HEK293 (cell line): ENCODE measurements at regions of chr11 and their contacts with region 1.

Region 1: DNA sequence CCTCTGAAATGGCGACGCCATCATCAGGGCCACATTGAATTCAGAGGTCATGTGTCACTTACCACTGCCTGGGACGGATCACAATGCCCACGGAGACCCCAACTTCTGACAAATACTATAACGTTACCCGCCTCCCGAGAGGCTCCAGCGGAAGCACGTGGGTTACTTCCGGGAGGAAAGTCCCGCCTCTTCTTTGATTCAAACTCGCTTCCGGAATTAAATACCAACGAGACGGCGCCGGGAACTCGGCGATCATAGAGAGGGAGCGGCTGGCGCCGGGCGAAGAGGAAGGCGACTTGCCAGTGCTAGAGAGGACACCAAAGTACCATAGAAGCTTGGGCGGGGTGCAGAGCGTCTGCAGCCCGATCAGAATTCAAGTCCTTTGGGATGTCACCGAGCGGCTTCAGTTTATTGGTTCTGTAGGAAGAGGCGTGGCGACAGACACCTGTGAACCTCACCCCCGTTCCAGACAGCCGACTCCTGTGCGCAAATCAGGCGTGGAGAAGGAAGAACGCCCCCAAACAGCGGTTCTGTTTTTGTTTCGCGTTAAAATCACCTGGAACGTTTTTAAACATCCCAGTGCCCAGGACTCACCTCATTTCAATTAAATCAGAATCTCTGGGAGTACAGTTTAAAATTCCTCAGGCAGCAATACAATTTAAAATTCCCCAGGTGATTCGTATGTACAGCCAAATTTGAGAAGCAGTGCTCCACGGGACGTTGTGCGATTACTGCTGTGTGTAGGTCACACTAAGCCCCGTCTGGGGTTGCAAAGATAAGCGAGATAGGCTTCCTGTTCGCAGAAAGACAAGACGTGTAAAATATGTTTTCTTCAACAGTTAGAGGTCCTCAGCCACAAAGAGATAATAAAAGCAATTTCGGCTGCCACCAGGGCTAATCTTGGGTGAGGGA is at the start of gene TIMM10:
- H3K4me3 ChIP-seq: peak within 1 kb of the TSS; percentile 94
- H3K27ac ChIP-seq: no peak within 1 kb of the TSS
- H3K4me1 ChIP-seq: no peaks in the 10 kb centered on the region
- CTCF ChIP-seq: no peak

Region 2: GRCh38 chr11:57456960-57457642 is 73.8 kb before region 1 on chr11:
- CTCF ChIA-PET with region 1: interaction called, 191 read pairs
- POLR2A ChIA-PET with region 1: interaction called, 6 read pairs
- H3K4me3 ChIP-seq: no peak overlapping the region
- H3K27ac ChIP-seq: no peak overlapping the region
- H3K4me1 ChIP-seq: no peaks in the 10 kb centered on the region
- CTCF ChIP-seq: peak; percentile 52

Region 3: DNA sequence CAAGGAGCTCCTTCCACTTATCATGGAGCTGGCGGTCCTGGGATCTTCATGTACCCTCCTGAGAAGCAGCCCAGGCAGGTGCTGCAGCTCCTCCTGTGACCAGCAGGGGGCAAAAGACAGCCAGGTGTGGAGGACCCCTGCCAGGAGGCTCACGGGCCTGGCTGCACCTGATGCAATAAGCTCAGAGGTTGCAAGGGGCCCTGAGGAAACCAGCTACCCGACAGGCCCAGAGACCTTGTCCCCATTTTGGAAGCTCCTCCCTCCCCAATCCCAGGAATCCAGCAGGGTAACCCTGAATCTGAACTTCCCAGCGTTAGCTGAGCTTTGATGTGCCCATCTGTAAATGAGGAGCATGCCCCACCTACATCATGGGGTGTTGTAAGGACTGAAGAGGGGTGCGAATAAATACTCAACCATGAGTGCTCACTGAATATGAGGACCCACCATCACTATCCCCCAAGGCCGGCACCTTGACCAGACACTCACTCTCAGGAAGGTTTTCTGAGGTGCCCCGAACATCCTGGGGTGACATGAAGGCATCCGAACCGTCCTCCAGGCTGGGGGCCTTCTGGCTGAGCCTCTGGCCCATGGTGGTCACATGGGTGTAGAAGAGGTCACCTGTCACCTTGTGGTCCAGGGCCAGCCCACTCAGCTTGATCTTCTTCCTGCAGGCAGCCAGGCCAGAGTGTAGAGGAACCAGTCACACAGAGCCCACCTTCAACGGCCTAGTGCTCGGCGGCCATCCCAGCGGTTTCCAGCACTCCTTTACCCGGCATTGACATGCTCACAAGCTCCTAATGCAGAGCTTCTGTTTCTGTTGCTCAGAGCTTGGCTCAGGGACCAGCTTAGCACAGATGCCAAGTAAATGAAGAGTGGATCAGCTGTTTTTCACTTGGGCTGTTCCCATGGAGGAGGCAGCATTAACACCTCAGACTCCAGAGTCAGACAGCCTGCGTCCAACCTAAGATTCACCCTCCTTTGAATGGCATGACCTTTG is 37.0 kb before region 1 on chr11:
- CTCF ChIA-PET with region 1: interaction called, 218 read pairs
- POLR2A ChIA-PET with region 1: interaction called, 11 read pairs
- H3K4me3 ChIP-seq: no peak overlapping the region
- H3K27ac ChIP-seq: peak overlapping the region; percentile 21; the same call in 1 of the 2 replicates
- H3K4me1 ChIP-seq: no peaks in the 10 kb centered on the region
- CTCF ChIP-seq: 0 out of 2 replicates have a peak, but pooled peaks have one; percentile 18

Region 4: DNA sequence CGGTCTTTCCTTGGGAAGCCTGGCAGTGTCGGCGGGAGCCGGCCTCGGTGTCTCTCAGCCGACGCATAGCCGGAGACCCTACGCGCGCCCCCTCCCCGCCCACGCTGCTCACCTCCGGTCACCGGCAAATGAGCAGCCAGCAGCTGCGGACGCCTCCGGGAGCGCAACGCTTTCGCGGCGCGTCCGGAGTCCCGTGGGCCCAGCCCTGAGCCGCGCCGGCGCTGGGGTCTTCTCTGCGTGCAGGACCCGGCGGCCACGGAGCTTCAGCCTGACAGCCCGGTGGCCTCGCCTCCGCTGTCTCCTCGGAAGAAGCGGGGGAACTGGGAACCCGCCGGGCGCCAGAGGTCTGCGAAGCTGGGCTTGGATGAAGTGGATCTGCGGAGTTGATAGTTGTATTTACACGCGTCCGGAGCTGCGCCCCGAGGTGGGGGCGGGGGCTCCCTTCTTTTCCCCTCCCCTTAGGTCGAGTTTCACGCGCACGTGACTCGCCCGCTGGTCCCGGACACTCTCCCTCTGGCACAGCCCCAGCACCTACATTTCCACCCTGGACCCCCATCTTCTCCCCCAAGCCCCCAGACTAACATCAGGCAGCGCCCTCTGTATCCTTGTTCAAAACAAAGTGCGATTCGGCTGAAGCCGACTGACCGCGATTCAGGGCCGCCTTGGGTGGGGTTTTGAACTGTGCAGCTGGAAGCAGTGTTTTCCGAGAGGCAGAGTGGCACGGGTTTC is 15.4 kb before region 1 on chr11 and contains the start of gene SLC43A1:
- CTCF ChIA-PET with region 1: interaction called, 71 read pairs
- POLR2A ChIA-PET with region 1: interaction called, 3 read pairs
- H3K4me3 ChIP-seq: peak within 1 kb of the TSS; percentile 59
- H3K27ac ChIP-seq: peak within 1 kb of the TSS; percentile 11; the same call in 1 of the 2 replicates
- H3K4me1 ChIP-seq: no peaks in the 10 kb centered on the region
- CTCF ChIP-seq: no peak

Region 5: DNA sequence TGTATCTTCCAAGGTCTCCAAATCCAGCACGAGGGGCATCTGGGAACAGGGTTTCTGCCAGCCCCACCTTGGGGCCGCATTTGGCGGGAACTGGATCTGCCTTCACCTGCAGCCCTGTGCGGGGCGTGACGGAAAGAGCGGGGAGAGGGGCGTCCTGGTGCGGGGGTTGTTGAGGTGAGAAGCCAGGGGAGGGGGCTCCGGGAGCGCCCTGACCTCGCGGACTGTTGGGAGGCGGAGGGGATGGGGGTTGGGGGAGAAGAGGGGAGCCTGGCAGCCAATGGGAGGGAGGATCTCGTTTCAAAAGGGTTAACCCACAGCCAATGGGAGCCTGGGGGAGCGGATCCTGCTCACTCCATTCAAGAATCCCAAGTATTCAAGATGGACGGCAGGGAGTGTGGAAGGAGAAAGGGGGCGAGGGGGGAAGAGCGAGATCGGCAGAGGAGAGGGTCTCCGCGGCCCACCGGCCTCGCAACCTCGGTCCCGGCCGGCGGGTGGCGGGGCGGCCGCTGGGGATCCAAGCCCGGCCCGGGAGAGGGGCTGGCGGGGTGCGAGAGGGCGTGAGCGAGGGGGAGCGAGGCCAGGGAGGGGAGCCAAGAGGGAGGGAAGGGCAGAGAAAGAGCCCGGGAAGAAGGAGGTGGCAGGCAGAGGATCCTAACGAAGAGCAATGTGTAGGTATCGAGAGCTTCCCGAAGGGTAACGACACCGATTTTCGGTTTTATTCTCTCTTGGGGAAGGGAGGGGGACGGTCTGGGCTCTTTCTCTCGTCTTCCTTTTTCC is 107.3 kb after region 1 on chr11:
- CTCF ChIA-PET with region 1: interaction called, 56 read pairs
- POLR2A ChIA-PET with region 1: interaction called, 3 read pairs
- H3K4me3 ChIP-seq: peak overlapping the region; percentile 70
- H3K27ac ChIP-seq: peak overlapping the region; percentile 62; the same call in 1 of the 2 replicates
- H3K4me1 ChIP-seq: no peaks in the 10 kb centered on the region; the same call in 1 of the 2 replicates
- CTCF ChIP-seq: no peak